ENCODE measurements at regions of chr6 and their contacts with region 1.

Region 1: DNA sequence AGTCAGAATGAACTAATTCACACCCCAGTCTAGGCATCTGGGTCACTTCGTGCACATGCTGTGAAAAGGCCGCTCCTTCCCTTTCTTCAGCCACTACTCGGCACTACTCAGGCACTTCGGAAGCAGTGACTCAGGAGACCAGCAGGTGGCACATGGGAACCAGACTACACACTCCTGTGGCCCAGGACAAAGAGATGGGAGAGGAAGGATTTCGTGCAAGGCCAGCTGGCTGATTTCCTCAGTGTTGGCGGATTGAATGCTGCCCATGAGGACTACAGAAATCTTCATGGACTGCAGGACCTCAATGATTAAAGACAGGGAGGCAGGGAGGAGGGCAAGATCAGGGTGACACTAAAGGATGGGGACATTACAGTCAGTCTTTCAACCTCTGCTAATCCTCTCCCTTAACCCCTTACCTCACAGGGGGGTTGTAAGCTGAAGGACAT is 117.8 kb upstream of the SPACA1 start:
- DNase-seq: peak; percentile 71
- ATAC-seq: peak; percentile 84
- H3K4me3 ChIP-seq: no peak overlapping the region
- H3K27ac ChIP-seq: peak overlapping the region; percentile 6; the same call in 1 of the 2 replicates
- H3K4me1 ChIP-seq: peaks cover 32% of the 10 kb centered on the region
- H3K27me3 ChIP-seq: no peaks in the 10 kb centered on the region
- CTCF ChIP-seq: peak; percentile 92 to 96 (median 92)
- EP300 ChIP-seq: peak in 1 of 2 experiments; percentile 7; a peak in 1 of 4 replicates
- POLR2A ChIP-seq: no peak
- RAD21 ChIP-seq: peak; percentile 98

Region 2: GRCh38 chr6:87210979-87211378 is 718.9 kb before region 1 on chr6:
- CTCF ChIA-PET with region 1: no interaction called
- POLR2A ChIA-PET with region 1: no interaction called
- RAD21 ChIA-PET with region 1: no interaction called
- SMC1A ChIA-PET with region 1: no interaction called
- in situ Hi-C with region 1: no loop called
- intact Hi-C with region 1: no loop called
- DNase-seq: peak; percentile 49
- ATAC-seq: peak; percentile 96
- H3K4me3 ChIP-seq: no peak overlapping the region
- H3K27ac ChIP-seq: peak overlapping the region; percentile 6; the same call in 1 of the 2 replicates
- H3K4me1 ChIP-seq: peaks cover 34% of the 10 kb centered on the region
- H3K27me3 ChIP-seq: no peaks in the 10 kb centered on the region
- CTCF ChIP-seq: no peak
- EP300 ChIP-seq: no peak
- POLR2A ChIP-seq: no peak
- RAD21 ChIP-seq: no peak

Region 3: DNA sequence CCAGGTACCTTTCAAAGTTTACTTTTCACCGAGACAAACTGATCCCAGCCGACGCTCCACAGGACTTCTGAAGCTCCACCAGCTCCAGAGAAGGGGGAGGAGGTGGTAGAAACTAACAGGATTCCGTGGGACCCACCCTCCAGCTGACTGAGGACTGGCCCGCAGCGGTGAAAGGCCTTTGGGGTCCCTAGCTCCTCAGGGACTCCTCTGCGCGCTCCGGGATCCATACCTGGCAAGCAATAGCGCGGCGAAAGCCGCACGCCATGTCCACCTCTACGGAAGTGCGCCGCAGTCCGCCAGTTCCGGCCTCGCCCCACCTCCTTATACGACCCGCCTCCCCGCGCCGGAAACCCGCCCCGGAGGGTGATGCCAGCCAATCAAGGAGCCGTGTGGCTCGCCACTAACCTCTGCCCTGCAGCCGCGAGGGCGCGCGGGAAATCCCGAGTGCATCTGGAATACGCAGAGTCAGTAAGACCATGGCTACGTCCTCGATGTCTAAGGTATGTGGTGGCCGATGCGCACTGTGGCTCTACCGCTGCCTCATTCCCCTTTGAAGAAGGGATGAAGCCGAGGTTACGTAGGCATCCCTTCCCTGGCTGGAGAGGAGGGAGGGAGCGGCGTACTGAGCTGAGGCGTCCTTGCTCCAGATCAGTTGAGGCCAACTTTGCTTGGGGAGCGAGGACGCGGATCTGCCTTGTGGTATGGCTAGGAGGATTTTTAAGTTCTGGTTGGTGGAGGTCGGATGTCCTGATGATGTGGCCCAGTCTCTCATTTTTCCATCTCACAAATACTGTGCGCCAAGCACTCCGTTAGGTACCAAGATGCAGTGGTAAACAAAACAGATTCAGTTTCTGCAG is 339.9 kb before region 1 on chr6 and contains the starts of genes ORC3 and RARS2:
- CTCF ChIA-PET with region 1: no interaction called
- POLR2A ChIA-PET with region 1: no interaction called
- RAD21 ChIA-PET with region 1: no interaction called
- SMC1A ChIA-PET with region 1: no interaction called
- in situ Hi-C with region 1: no loop called
- intact Hi-C with region 1: loop called (anchors 10 kb)
- DNase-seq: peak; percentile 81
- ATAC-seq: peak; percentile 99
- H3K4me3 ChIP-seq: peak within 1 kb of the TSS; percentile 99
- H3K27ac ChIP-seq: peak within 1 kb of the TSS; percentile 87
- H3K4me1 ChIP-seq: peaks cover 3% of the 10 kb centered on the region; the same call in 1 of the 2 replicates
- H3K27me3 ChIP-seq: no peaks in the 10 kb centered on the region
- CTCF ChIP-seq: no peak
- EP300 ChIP-seq: no peak
- POLR2A ChIP-seq: peak; percentile 93
- RAD21 ChIP-seq: no peak
- polyA plus RNA-seq, gene ORC3: 65.4 to 76.3 TPM
- polyA plus RNA-seq, gene RARS2: 37.9 to 43.0 TPM

Region 4: DNA sequence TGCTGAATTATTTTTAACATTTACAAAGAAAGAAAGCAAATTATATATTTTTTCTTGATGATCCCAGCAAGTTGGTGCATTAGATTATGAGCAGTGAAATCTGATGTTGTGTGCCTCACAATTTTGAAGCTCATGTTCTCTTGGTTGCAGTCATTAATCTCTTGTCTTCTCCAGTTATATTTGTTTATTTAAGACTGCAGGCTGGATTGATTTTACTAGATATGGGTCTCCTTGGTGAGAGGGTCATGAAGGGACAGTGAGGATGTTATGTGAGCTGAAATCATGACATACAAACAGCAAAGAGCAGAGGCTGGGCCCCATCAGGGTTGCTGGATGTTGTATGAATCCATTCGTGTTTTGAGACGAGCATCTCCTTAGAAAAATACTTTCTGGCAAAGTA is 163.7 kb before region 1 on chr6:
- CTCF ChIA-PET with region 1: no interaction called
- POLR2A ChIA-PET with region 1: no interaction called
- RAD21 ChIA-PET with region 1: no interaction called
- SMC1A ChIA-PET with region 1: no interaction called
- in situ Hi-C with region 1: no loop called
- intact Hi-C with region 1: no loop called
- DNase-seq: no peak
- ATAC-seq: no peak
- H3K4me3 ChIP-seq: no peak overlapping the region
- H3K27ac ChIP-seq: no peak overlapping the region
- H3K4me1 ChIP-seq: no peaks in the 10 kb centered on the region
- H3K27me3 ChIP-seq: no peaks in the 10 kb centered on the region
- CTCF ChIP-seq: no peak
- EP300 ChIP-seq: no peak
- POLR2A ChIP-seq: no peak
- RAD21 ChIP-seq: no peak

Region 5: GRCh38 chr6:87907521-87907920 is 22.3 kb before region 1 on chr6:
- CTCF ChIA-PET with region 1: interaction called, 12 read pairs
- POLR2A ChIA-PET with region 1: interaction called, 5 read pairs
- RAD21 ChIA-PET with region 1: interaction called, 79 read pairs
- SMC1A ChIA-PET with region 1: interaction called, 52 read pairs
- in situ Hi-C with region 1: no loop called
- intact Hi-C with region 1: loop called (anchors 1 kb)
- DNase-seq: peak; percentile 63
- ATAC-seq: peak; percentile 77
- H3K4me3 ChIP-seq: no peak overlapping the region
- H3K27ac ChIP-seq: peak overlapping the region; percentile 50; the same call in 1 of the 2 replicates
- H3K4me1 ChIP-seq: peaks cover 55% of the 10 kb centered on the region
- H3K27me3 ChIP-seq: no peaks in the 10 kb centered on the region
- CTCF ChIP-seq: no peak
- EP300 ChIP-seq: peak in 1 of 2 experiments; percentile 66; a peak in 2 of 4 replicates
- POLR2A ChIP-seq: no peak
- RAD21 ChIP-seq: 0 out of 2 replicates have a peak, but pooled peaks have one; percentile 6

Region 6: GRCh38 chr6:88141561-88142296 is 211.9 kb after region 1 on chr6:
- CTCF ChIA-PET with region 1: interaction called, 4 read pairs
- POLR2A ChIA-PET with region 1: no interaction called
- RAD21 ChIA-PET with region 1: interaction called, 11 read pairs
- SMC1A ChIA-PET with region 1: interaction called, 7 read pairs
- in situ Hi-C with region 1: no loop called
- intact Hi-C with region 1: no loop called
- DNase-seq: peak; percentile 84
- ATAC-seq: peak; percentile 94
- H3K4me3 ChIP-seq: 0 out of 2 replicates have a peak overlapping the region, but pooled peaks have one; percentile 29
- H3K27ac ChIP-seq: peak overlapping the region; percentile 61
- H3K4me1 ChIP-seq: peaks cover 18% of the 10 kb centered on the region
- H3K27me3 ChIP-seq: no peaks in the 10 kb centered on the region
- CTCF ChIP-seq: no peak
- EP300 ChIP-seq: peak in 1 of 2 experiments; percentile 40; a peak in 1 of 4 replicates
- POLR2A ChIP-seq: no peak
- RAD21 ChIP-seq: peak; percentile 37

Region 7: DNA sequence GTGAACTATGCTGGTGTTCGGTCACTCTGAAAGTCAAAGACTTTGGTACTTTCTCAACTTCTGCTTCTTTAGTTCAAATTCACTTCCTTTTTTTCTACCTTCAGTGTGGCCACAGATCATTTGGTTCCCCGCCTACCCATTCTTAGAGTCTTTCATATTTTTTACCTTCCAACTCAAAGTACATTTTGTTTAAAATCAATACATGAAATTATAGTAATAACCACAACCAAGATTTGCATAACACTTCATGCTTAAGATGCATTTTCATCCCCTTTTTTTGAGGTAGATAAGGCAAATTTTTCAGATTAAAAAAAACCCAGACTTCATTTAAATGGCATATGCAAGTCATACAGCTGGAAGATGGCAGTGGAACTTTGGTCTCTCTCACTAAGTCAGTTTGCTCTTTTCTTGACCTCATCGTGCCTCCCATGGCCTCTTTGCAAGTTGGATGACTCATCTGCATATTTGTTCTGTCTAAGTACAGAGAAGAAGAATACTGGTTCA is 248.1 kb after region 1 on chr6:
- CTCF ChIA-PET with region 1: interaction called, 11 read pairs
- POLR2A ChIA-PET with region 1: no interaction called
- RAD21 ChIA-PET with region 1: interaction called, 7 read pairs
- SMC1A ChIA-PET with region 1: interaction called, 10 read pairs
- in situ Hi-C with region 1: no loop called
- intact Hi-C with region 1: no loop called
- DNase-seq: peak; percentile 32
- ATAC-seq: peak; percentile 75
- H3K4me3 ChIP-seq: no peak overlapping the region
- H3K27ac ChIP-seq: no peak overlapping the region
- H3K4me1 ChIP-seq: peaks cover 16% of the 10 kb centered on the region; the same call in 1 of the 2 replicates
- H3K27me3 ChIP-seq: no peaks in the 10 kb centered on the region
- CTCF ChIP-seq: no peak
- EP300 ChIP-seq: no peak
- POLR2A ChIP-seq: no peak
- RAD21 ChIP-seq: no peak

Region 8: DNA sequence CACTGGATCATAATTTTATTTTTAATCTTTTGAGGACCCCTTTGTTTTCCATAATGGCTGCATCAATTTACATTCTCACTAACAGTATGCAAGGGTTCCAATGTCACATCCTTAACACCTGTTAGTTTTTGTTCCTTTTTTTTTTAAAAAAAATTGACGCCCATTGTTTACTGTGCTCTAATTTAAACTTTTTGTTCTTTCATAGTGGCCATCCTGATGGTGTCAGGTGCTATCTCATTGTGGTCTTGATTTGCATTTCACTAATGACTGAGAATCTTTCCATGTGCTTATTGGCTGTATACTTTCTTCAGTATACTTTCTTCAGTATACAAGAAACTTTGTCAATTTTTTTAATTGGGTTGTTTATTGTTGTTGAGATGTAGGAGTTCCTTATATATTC is 686.5 kb after region 1 on chr6:
- CTCF ChIA-PET with region 1: no interaction called
- POLR2A ChIA-PET with region 1: no interaction called
- RAD21 ChIA-PET with region 1: interaction called, 5 read pairs
- SMC1A ChIA-PET with region 1: no interaction called
- in situ Hi-C with region 1: no loop called
- intact Hi-C with region 1: loop called (anchors 10 kb)
- DNase-seq: no peak
- ATAC-seq: peak; percentile 78
- H3K4me3 ChIP-seq: peak overlapping the region; percentile 9; the same call in 1 of the 2 replicates
- H3K27ac ChIP-seq: peak overlapping the region; percentile 62
- H3K4me1 ChIP-seq: peaks cover 15% of the 10 kb centered on the region; the same call in 1 of the 2 replicates
- H3K27me3 ChIP-seq: no peaks in the 10 kb centered on the region
- CTCF ChIP-seq: no peak
- EP300 ChIP-seq: peak; percentile 44 to 90; a peak in 3 of 4 replicates
- POLR2A ChIP-seq: no peak
- RAD21 ChIP-seq: no peak

Region 9: DNA sequence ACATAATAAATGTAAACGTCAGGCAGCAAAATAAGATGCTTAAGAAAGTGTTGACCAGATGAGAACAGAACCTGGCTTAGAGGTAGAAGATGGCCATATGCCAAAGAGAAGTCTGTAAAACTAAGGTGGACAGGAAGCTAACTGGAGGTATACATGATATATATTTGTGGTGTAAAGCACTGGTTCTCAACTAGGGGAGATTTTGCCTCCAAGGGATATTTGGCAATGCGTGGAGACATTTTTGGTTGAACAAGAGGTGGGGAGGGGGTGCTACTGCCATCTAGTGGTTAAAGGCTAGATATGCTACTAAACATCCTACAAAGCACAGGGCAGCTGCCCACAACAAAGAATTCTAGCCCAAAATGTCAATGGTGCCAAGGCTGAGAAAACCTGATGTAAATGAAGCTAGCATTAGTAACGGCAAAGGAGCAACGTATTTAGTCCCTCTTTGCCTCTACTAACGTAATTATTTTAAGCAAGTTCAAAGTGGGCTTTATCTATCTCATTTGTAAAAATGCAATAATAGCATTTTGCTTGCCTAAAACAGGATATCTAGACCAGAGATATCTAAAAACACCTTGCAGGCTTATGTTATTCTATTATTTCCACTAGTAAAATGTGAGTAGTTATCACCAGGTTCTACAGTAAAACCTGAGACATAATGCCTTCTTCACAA is 851.0 kb after region 1 on chr6:
- CTCF ChIA-PET with region 1: interaction called, 8 read pairs
- POLR2A ChIA-PET with region 1: no interaction called
- RAD21 ChIA-PET with region 1: interaction called, 11 read pairs
- SMC1A ChIA-PET with region 1: interaction called, 10 read pairs
- in situ Hi-C with region 1: loop called (anchors 5 kb)
- intact Hi-C with region 1: loop called (anchors 1 kb)
- DNase-seq: peak; percentile 63
- ATAC-seq: peak; percentile 90
- H3K4me3 ChIP-seq: no peak overlapping the region
- H3K27ac ChIP-seq: no peak overlapping the region
- H3K4me1 ChIP-seq: no peaks in the 10 kb centered on the region
- H3K27me3 ChIP-seq: no peaks in the 10 kb centered on the region
- CTCF ChIP-seq: peak; percentile 60 to 68 (median 67); a peak in 5 of 6 replicates
- EP300 ChIP-seq: no peak
- POLR2A ChIP-seq: no peak
- RAD21 ChIP-seq: peak; percentile 88